Aorta (tissue), 5 donors: ENCODE measurements at regions of chr2 and their contacts with region 1.

Region 1: DNA sequence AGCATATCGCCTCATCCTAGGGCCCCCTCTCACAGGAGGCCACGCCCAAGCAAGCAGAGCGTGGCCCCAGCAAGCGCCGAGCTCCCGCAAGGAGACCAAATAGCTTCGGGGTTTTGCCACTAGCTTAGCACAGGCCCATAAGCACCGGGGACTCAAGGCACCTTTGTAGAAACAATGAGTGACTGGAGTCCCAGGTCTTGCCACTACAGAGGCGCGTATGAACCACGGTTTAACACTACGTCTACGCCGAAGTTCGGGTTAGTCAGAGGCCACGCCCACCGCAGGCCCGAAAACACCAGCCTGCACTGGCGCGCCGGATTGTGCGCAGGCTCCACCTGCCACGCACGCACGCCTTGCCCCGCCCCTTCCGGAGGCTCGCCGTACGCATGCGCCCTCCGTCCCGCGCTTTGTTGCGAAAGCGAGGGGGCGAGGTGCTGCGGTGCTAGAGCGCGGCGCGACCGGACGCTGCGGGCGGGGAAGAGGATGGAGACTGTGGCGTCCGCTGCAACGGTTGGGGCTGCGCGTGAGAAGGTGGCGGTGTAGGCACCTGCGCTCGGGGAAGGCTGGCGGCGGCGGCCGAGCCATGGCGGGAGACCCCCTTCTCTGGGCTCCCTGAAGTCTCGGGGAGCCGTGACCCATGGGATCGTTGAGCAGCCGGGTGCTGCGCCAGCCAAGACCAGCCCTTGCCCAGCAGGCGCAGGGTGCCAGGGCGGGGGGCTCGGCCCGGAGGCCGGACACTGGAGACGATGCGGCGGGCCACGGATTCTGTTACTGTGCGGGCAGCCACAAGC is at the start of gene GMCL1:
- DNase-seq: peak; percentile 98 to 100
- ATAC-seq: peak; percentile 99
- H3K4me3 ChIP-seq: peak within 1 kb of the TSS; percentile 68 to 92
- H3K27ac ChIP-seq: peak within 1 kb of the TSS; percentile 62 to 97
- H3K4me1 ChIP-seq: no peaks in the 10 kb centered on the region
- H3K27me3 ChIP-seq: no peaks in the 10 kb centered on the region
- total RNA-seq, gene GMCL1: 16.1 to 16.9 TPM

Region 2: DNA sequence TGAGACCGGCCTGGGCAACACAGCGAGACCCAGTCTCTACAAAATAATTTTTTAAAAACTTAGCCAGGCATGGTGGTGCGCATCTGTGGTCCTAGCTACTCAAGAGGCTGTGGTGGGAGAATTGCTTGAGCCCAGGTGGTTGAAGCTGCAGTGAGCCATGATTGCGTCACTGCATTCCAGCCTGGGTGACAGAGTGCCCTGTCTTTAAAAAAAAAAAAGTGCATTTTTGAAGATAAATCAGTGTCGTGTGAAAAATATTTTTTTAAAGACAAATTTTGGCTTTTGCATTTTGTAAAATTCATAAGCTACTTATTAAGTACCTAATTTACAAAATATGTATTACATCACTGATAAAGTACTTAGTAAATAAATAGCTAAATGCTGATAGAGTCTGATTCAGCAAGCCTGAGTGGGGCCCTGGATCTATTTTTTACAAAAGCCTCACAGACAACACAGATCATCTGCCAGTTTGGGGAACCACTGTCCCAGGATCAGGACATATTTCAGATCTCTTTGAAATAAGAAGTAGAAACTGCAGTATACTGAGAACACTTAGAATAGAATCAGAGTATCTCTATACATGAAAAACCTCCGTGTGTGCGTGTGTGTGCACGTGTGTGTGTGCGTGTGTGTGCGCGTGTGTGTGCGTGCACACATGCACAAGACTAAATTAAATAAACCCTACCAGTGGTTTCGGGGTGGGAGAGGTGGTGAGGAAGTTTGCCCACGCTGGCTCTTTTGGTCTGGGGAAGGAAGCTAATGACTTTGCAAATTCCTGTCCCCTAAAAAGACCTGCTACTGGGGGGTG is 247.5 kb before region 1 on chr2:
- intact Hi-C with region 1: loop called in 1 of 2 experiments (anchors 10 kb)
- DNase-seq: no peak
- ATAC-seq: no peak
- H3K4me3 ChIP-seq: no peak overlapping the region
- H3K27ac ChIP-seq: no peak overlapping the region
- H3K4me1 ChIP-seq: peaks cover 0 to 2% of the 10 kb centered on the region in 2 donors
- H3K27me3 ChIP-seq: no peaks in the 10 kb centered on the region

Region 3: DNA sequence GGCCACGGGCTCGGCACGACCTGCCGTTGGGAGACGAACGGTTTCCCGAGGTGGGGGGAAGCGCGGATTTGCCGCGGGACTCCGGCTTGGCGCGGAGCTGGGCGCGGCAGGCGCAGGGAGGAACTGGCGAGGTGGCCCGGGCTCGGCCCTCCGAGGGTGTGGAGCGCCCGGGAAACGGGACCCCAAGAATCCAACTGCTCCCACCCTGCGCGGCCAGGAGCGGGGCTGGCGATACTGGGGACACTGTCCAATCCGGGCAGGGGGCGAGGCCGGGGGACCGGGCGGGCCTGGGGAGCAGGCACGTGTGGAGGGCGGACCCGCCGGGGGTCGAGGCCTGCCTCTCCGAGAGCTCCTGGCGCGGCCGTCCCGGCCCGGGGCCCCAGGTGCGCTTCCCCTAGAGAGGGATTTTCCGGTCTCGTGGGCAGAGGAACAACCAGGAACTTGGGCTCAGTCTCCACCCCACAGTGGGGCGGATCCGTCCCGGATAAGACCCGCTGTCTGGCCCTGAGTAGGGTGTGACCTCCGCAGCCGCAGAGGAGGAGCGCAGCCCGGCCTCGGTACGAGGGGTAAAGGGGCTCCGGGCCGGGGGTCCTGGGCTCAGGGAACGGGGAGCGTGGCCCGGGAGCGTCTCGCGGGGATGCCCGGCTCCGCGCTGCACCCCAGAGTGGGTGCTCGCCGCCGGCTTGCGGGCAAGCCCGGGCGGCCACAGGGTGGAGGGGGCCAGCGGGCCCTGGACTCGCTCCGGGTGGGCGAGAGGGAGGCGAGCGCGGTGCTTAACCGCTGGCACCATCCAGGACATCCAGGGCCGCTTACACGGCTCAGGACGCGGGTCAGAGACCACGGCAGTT is 87.6 kb before region 1 on chr2 and contains the start of gene ANXA4:
- intact Hi-C with region 1: loop called in 1 of 2 experiments (anchors 5 kb)
- DNase-seq: peak; percentile 91 to 92
- ATAC-seq: peak; percentile 89
- H3K4me3 ChIP-seq: peak within 1 kb of the TSS; percentile 90 to 93
- H3K27ac ChIP-seq: peak within 1 kb of the TSS; percentile 32 to 94
- H3K4me1 ChIP-seq: peaks cover 0 to 2% of the 10 kb centered on the region in 2 donors
- H3K27me3 ChIP-seq: no peaks in the 10 kb centered on the region
- total RNA-seq, gene ANXA4: 94.6 to 120 TPM

Region 4: GRCh38 chr2:69863298-69863697 is 33.8 kb after region 1 on chr2:
- intact Hi-C with region 1: no loop called
- DNase-seq: no peak
- ATAC-seq: no peak
- H3K4me3 ChIP-seq: no peak overlapping the region
- H3K27ac ChIP-seq: no peak overlapping the region
- H3K4me1 ChIP-seq: no peaks in the 10 kb centered on the region
- H3K27me3 ChIP-seq: no peaks in the 10 kb centered on the region